ENCODE measurements at regions of chr6 and their contacts with region 1.

Region 1: DNA sequence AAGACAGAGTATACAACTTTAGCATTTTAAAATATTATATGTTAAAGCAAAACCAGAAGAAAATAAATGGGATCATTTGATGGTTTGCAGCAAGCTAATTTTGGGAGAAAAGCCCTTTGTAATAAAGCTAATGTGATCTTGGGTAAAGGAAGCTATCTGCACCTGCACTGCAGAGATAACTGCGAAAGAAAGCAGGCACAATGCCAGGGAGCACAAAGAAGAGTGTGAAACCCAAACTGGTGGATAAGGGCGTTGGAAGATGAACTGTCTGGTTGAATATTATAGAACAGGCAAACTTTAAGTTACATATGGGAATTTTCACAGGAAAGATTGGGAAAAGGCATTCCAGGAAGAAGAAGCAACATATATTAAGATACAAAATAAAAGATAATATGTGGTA is 179.2 kb upstream of the KHDRBS2 start:
- DNase-seq: no peak
- H3K4me3 ChIP-seq: no peak overlapping the region
- H3K4me3 Mint-ChIP-seq: no peak overlapping the region
- H3K27ac Mint-ChIP-seq: no peak overlapping the region
- H3K4me1 ChIP-seq: no peaks in the 10 kb centered on the region
- H3K4me1 Mint-ChIP-seq: no peaks in the 10 kb centered on the region
- H3K27me3 ChIP-seq: no peaks in the 10 kb centered on the region
- H3K27me3 Mint-ChIP-seq: peaks cover 3% of the 10 kb centered on the region
- CTCF ChIP-seq: no peak

Region 2: GRCh38 chr6:62429781-62430180 is 35.4 kb before region 1 on chr6:
- CTCF ChIA-PET with region 1: no interaction called
- POLR2A ChIA-PET with region 1: no interaction called
- intact Hi-C with region 1: loop called (anchors 1 kb)
- DNase-seq: no peak
- H3K4me3 ChIP-seq: no peak overlapping the region
- H3K4me3 Mint-ChIP-seq: no peak overlapping the region
- H3K27ac Mint-ChIP-seq: no peak overlapping the region
- H3K4me1 ChIP-seq: no peaks in the 10 kb centered on the region
- H3K4me1 Mint-ChIP-seq: no peaks in the 10 kb centered on the region
- H3K27me3 ChIP-seq: no peaks in the 10 kb centered on the region
- H3K27me3 Mint-ChIP-seq: no peaks in the 10 kb centered on the region
- CTCF ChIP-seq: no peak